Body of pancreas (tissue), 4 donors: ENCODE measurements at regions of chr16 and their contacts with region 1.

Region 1: GRCh38 chr16:88737298-88738150 is 31.2 kb downstream of the CTU2 start:
- DNase-seq: peak; percentile 80 to 86 (median 84)
- ATAC-seq: peak; percentile 89
- H3K4me3 ChIP-seq: no peak overlapping the region
- H3K27ac ChIP-seq: no peak overlapping the region
- H3K4me1 ChIP-seq: peaks cover 9% of the 10 kb centered on the region
- H3K27me3 ChIP-seq: no peaks in the 10 kb centered on the region
- CTCF ChIP-seq: peak; percentile 96 to 100 (median 99)
- POLR2A ChIP-seq: no peak

Region 2: DNA sequence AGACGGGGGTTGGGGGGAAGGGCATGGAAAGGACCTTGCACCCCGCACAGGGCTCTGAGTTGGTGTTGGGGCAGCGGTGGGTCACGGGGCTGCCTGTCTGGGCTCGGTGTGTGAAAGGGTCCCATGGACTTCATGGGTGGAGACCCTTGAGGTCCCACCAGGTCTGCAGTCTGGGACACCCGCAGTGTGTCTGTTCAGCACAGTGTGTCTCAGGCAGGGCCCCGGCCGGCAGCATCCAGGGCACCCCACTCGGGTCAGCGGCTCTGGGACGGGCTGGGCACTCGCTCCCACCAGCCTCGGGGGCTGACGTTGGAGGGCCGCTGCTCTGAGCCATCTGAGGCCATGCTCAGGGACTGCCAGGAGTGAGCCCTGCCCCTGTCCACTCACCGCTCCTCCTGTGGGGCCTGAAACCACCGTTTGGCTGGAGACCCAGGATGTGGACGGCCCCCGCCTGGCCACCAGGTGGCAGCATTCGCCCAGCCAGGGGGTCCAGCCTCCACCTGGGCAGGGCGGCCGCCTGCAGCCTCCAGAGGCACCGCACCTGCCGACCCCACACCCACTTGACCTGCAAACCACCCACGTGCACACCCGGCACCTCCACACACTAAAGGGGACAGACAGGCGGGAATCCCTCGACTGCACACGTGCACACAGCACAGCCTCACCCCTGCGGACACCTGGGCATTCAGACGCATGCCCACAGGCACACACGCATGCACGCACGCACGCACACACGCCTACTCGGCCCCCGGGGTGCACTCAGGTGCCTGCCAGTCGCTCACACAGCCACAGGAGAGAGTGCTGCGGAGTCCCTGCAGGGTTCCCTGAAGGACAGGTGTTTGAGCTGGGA is 294.6 kb before region 1 on chr16:
- intact Hi-C with region 1: no loop called
- DNase-seq: peak; percentile 80 to 88 (median 86)
- ATAC-seq: peak; percentile 93
- H3K4me3 ChIP-seq: no peak overlapping the region
- H3K27ac ChIP-seq: no peak overlapping the region
- H3K4me1 ChIP-seq: peaks cover 12% of the 10 kb centered on the region
- H3K27me3 ChIP-seq: no peaks in the 10 kb centered on the region
- CTCF ChIP-seq: peak; percentile 95 to 99 (median 97)
- POLR2A ChIP-seq: no peak

Region 3: DNA sequence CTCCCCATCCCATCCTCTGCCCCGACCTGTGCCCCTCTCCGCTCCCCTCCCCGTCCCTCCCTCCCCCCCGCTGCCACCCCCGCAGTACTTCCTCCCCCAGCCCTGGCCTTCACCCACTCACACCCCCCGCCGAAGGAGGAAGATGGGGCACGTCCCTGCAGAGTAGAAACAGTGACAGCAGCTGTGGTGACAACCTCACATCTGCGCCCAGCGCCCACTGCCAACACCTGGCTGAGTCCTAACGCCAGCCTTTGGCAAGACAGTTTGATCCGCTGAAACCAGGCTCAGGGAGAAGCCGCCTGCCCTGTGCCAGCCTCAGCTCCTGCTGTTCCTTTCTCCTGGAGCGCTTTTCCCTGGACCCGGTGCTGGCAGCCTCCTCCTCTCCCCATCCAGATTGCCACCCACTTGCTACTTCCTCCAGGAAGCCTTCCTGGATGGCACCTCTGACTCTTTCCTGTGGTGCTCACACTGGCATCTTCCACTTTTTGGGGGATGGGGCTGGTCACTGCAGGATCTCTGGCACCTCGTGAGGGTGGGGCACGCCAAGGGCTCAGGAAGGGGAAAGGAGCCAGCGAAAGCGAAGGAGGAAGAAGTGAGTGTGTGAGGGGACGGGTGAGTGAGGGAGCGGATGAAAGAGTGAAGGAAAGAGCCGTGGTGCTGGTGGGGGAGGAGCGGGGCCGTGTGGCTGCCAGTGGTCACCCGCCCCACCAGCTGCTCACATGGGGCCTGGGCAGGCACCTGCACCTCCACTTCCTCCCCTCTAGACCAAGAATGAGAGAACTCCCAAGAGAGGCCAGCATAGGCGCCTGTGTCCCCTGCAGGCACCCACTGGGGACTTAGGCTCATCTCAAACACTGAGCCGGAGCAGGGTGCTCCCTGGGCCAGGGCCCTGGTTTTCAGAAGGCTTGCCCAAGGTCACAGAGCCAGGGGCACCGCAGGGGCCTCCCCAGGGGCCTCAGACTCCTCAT is 257.4 kb before region 1 on chr16:
- intact Hi-C with region 1: no loop called
- DNase-seq: peak; percentile 85 to 91 (median 90)
- ATAC-seq: peak; percentile 77
- H3K4me3 ChIP-seq: no peak overlapping the region
- H3K27ac ChIP-seq: peak overlapping the region; percentile 50 to 82 (median 73)
- H3K4me1 ChIP-seq: peaks cover 87% of the 10 kb centered on the region
- H3K27me3 ChIP-seq: no peaks in the 10 kb centered on the region
- CTCF ChIP-seq: no peak
- POLR2A ChIP-seq: no peak

Region 4: DNA sequence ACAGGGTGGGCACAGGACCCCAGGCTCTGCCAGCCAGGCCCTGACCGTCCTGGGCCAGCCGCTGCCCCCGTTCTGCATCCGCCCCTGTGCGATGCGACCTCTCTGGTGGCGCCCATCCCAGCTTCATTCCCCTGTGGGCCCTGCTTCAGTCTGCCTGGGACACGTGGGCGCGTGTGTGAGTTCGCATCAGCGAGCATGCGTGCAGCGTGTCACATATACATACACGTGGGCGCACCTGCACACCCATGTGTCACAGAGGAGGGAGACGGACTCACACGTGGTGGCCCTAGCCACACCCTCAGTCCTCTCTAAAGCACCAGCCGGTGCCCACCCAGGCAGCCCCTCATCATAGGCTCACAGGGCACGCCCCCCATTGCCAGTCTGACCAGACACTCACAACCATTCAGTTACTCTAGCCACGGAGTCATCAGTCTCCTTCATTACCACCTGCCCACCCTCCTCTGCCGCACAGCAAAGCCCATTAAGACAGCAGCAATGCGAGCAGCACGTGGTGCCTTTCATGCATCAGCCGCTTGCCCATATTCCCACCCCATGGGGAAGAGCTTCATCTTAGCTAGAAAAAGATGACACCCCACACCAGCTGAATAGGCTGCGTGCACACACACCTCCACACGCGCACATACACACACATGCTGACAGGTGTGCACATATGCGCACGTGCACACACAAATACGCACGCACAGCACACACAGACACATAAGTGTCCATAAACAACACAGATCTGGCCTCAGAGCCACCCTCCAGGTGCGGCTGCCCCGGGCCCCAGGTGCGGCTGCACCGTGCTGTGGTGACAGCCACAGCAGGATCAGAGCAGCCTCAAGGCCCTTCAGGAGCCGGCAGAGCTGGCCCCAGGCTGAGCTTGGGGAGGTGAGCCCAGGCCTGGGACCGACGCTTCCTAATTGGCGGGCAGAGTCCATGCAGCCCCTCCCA is 424.5 kb after region 1 on chr16:
- intact Hi-C with region 1: loop called (anchors 5 kb)
- DNase-seq: no peak
- ATAC-seq: no peak
- H3K4me3 ChIP-seq: no peak overlapping the region
- H3K27ac ChIP-seq: no peak overlapping the region
- H3K4me1 ChIP-seq: peaks cover under 1% of the 10 kb centered on the region
- H3K27me3 ChIP-seq: peaks cover 0 to 1% of the 10 kb centered on the region in 2 donors
- CTCF ChIP-seq: no peak
- POLR2A ChIP-seq: no peak

Region 5: DNA sequence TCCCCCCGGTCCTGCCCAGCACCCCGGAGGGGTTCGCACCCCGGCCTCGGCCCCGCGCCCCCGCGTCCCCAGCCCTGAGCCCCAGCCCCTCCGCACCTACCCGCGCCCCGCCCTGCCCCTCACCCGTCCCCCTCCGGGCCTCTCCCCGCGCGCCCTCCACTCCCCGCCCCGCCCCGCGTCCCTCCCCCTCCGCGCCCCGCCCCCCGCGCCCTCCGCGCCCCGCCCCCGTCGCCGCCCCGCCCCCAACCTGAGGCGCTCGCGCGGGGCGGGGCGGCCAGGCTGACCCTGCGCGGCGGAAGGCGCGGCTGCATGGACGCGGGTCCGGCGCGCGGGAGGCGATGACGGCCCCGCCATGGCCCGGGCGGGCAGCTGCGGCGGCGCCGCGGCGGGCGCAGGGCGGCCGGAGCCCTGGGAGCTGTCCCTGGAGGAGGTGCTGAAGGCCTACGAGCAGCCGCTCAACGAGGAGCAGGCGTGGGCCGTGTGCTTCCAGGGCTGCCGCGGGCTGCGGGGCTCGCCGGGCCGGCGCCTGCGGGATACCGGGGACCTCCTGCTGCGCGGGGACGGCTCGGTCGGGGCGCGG is 1090.8 kb after region 1 on chr16 and contains the start of gene SPIRE2:
- intact Hi-C with region 1: no loop called
- DNase-seq: peak; percentile 79 to 83 (median 80)
- ATAC-seq: peak; percentile 91
- H3K4me3 ChIP-seq: peak within 1 kb of the TSS; percentile 45 to 62
- H3K27ac ChIP-seq: peak within 1 kb of the TSS; percentile 18 to 73 (median 68)
- H3K4me1 ChIP-seq: peaks cover 17% of the 10 kb centered on the region
- H3K27me3 ChIP-seq: no peaks in the 10 kb centered on the region
- CTCF ChIP-seq: peak in 1 of 7 experiments; percentile 2
- POLR2A ChIP-seq: no peak
- total RNA-seq, gene SPIRE2: 7.3 to 7.6 TPM